ENCODE measurements at regions of chr7 and their contacts with region 1.

Region 1: DNA sequence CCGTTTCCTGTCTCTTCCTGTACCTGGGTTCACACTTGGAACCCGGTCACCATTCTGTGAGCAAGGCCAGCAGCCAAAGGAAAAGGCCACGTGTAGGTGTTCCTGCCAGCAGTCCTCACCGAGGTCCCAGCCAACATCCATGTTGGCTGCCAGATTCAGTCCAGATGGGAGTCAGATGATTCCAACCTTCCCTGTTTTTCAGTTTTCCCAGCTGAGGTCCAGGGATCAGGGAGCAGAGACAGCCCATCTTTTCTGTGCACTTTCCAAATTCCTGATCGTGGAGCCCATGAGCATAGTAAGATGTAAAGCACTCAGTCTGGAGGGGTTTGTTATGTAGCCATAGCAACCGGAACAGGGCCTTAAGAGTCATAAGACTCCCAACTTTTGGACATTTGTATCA is 3.9 kb upstream of the PVRIG start:
- DNase-seq: peak in 4 of 6 donors; percentile 31 to 59 (median 41)
- ATAC-seq: peak in 3 of 4 donors; percentile 31 to 45 (median 38)
- H3K4me3 ChIP-seq: no peak overlapping the region
- H3K27ac ChIP-seq: no peak overlapping the region
- H3K4me1 ChIP-seq: no peaks in the 10 kb centered on the region
- H3K27me3 ChIP-seq: no peaks in the 10 kb centered on the region
- CTCF ChIP-seq: no peak

Region 2: GRCh38 chr7:100081535-100082102 is 134.3 kb before region 1 on chr7 and contains the start of gene ZNF3:
- intact Hi-C with region 1: no loop called
- DNase-seq: peak; percentile 97 to 99 (median 98)
- ATAC-seq: peak; percentile 92 to 97 (median 94)
- H3K4me3 ChIP-seq: peak within 1 kb of the TSS; percentile 74 to 95 (median 86)
- H3K27ac ChIP-seq: peak within 1 kb of the TSS; percentile 55 to 90 (median 84)
- H3K4me1 ChIP-seq: peaks cover 0 to 16% (median 15%) of the 10 kb centered on the region in 3 donors
- H3K27me3 ChIP-seq: no peaks in the 10 kb centered on the region
- CTCF ChIP-seq: peak; percentile 86 to 97 (median 94)
- total RNA-seq, gene ZNF3: 9.6 to 21.2 (median 13.2) TPM

Region 3: GRCh38 chr7:100132697-100133151 is 83.2 kb before region 1 on chr7:
- intact Hi-C with region 1: loop called in 1 of 3 experiments (anchors 10 kb)
- DNase-seq: peak in 5 of 6 donors; percentile 50 to 70 (median 64)
- ATAC-seq: peak; percentile 69 to 84 (median 81)
- H3K4me3 ChIP-seq: peak overlapping the region in 1 of 4 donors; percentile 1
- H3K27ac ChIP-seq: no peak overlapping the region
- H3K4me1 ChIP-seq: peaks cover 0 to 9% (median 0%) of the 10 kb centered on the region in 3 donors
- H3K27me3 ChIP-seq: no peaks in the 10 kb centered on the region
- CTCF ChIP-seq: peak; percentile 42 to 83 (median 74)

Region 4: GRCh38 chr7:100148559-100149350 is 67.1 kb before region 1 on chr7 and contains the start of gene LAMTOR4:
- intact Hi-C with region 1: loop called in 1 of 3 experiments (anchors 10 kb)
- DNase-seq: peak; percentile 92 to 100 (median 99)
- ATAC-seq: peak; percentile 97 to 98 (median 98)
- H3K4me3 ChIP-seq: peak within 1 kb of the TSS; percentile 55 to 79 (median 76)
- H3K27ac ChIP-seq: peak within 1 kb of the TSS; percentile 26 to 76 (median 60)
- H3K4me1 ChIP-seq: peaks cover 0 to 6% (median 0%) of the 10 kb centered on the region in 3 donors
- H3K27me3 ChIP-seq: no peaks in the 10 kb centered on the region
- CTCF ChIP-seq: no peak
- total RNA-seq, gene LAMTOR4: 43.8 to 57.3 (median 51.8) TPM

Region 5: DNA sequence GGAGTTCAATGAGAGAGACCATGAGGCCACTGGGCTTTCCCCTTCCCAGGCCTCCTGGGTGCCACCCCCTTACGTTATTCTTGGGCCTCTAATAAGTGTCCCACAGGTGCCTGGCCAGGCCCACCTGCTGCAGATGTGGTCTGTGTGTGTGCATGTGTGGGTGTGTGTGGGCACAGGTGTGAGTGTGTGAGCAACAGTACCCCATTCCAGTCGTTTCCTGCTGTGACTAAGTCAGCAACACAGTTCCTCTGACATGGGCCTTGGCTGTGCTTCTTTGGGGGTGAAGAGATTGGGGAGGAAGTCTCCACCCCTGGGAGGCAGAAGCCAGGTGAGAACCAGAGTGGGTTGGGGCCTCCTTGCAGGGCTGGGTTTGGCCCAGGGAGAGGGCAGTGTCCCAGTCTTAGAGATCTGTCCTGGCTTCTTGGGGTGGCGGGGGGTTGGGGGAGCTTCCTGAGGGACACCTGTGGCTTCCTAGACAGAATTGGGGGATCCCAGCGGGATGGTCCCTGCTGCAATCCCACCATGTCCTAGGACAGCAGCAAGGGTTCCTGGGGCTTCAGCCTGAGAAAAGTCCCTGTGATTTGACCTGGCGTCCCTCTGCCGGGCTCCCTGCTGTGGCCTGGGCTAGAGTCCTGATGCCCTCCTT is 137.9 kb after region 1 on chr7:
- intact Hi-C with region 1: no loop called
- DNase-seq: no peak
- ATAC-seq: no peak
- H3K4me3 ChIP-seq: no peak overlapping the region
- H3K27ac ChIP-seq: no peak overlapping the region
- H3K4me1 ChIP-seq: no peaks in the 10 kb centered on the region
- H3K27me3 ChIP-seq: no peaks in the 10 kb centered on the region
- CTCF ChIP-seq: no peak

Measured in pancreas (tissue), 10 donors.